ENCODE measurements at regions of chr4 and their contacts with region 1.

Region 1: GRCh38 chr4:14035076-14035475 is 407.6 kb upstream of the BOD1L1 start:
- DNase-seq: no peak
- H3K4me3 ChIP-seq: no peak overlapping the region
- H3K27ac ChIP-seq: no peak overlapping the region
- H3K4me1 ChIP-seq: no peaks in the 10 kb centered on the region
- H3K27me3 ChIP-seq: no peaks in the 10 kb centered on the region
- CTCF ChIP-seq: no peak
- POLR2A ChIP-seq: no peak

Region 2: DNA sequence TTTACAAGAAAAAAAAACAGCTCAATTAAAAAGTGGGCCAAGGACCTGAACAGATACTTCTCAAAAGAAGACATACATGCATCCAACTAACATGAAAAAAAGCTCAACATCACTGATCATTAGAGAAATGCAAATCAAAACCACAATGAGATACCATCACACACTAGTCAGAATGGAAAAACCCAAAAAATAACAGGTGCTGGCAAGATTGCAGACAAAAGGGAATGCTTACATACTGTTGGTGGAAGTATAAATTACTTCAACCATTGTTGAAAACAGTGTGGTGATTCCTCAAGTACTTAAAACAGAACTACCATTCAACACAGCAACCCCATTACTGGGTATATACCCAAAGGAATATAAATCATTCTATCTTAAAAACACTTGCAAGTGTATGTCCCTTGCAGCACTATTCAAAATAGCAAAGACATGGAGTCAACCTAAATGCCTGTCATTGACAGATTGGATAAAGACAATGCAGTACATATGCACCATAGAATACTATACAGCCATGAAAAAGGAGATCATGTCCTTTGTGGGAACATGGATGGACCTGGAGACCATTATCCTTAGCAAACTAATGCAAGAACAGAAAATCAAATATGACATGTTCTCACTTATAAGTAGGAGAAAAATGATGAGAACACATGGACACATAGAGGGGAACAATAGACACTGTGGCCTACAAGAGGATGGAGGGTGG is 648.5 kb before region 1 on chr4:
- intact Hi-C with region 1: loop called (anchors 10 kb)
- DNase-seq: no peak
- H3K4me3 ChIP-seq: no peak overlapping the region
- H3K27ac ChIP-seq: no peak overlapping the region
- H3K4me1 ChIP-seq: no peaks in the 10 kb centered on the region
- H3K27me3 ChIP-seq: no peaks in the 10 kb centered on the region
- CTCF ChIP-seq: no peak
- POLR2A ChIP-seq: no peak

Region 3: DNA sequence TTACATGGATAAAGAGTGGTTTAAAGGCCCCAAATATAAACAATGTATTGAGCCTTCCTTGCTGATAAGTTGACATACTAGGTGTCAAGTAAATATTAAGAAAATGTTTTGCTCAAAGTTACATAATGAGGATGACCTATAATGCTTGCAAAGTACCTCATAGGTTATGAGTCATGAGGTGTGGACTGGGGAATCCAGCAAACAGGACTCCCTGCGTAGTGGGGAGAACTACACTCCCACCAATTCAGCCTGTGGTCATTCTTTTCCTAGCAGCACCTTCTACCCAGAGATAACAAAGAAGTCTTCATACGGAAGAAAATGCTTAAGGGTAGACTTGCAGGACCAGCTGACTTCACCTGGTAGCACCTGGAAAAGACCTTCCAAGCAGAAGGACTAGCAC is 548.3 kb after region 1 on chr4:
- intact Hi-C with region 1: no loop called
- DNase-seq: no peak
- H3K4me3 ChIP-seq: no peak overlapping the region
- H3K27ac ChIP-seq: no peak overlapping the region
- H3K4me1 ChIP-seq: no peaks in the 10 kb centered on the region
- H3K27me3 ChIP-seq: no peaks in the 10 kb centered on the region
- CTCF ChIP-seq: no peak
- POLR2A ChIP-seq: no peak